Common myeloid progenitor, CD34-positive (primary cell): ENCODE measurements at regions of chr2 and their contacts with region 1.

Region 1: GRCh38 chr2:185738679-185739472 is at the start of gene FSIP2:
- DNase-seq: peak; percentile 82 to 83 (median 82)
- H3K4me3 ChIP-seq: peak within 1 kb of the TSS; percentile 15 to 81 (median 67)
- H3K27ac ChIP-seq: no peak within 1 kb of the TSS
- H3K4me1 ChIP-seq: peaks cover 0 to 11% (median 6%) of the 10 kb centered on the region in 4 experiments
- H3K27me3 ChIP-seq: peaks cover 0 to 19% (median 6%) of the 10 kb centered on the region in 5 experiments

Region 2: GRCh38 chr2:185291035-185291647 is 447.7 kb before region 1 on chr2:
- CTCF ChIA-PET with region 1: interaction called, 20 read pairs
- POLR2A ChIA-PET with region 1: no interaction called
- DNase-seq: peak; percentile 40 to 69 (median 66)
- H3K4me3 ChIP-seq: no peak overlapping the region
- H3K27ac ChIP-seq: no peak overlapping the region
- H3K4me1 ChIP-seq: no peaks in the 10 kb centered on the region
- H3K27me3 ChIP-seq: no peaks in the 10 kb centered on the region

Region 3: DNA sequence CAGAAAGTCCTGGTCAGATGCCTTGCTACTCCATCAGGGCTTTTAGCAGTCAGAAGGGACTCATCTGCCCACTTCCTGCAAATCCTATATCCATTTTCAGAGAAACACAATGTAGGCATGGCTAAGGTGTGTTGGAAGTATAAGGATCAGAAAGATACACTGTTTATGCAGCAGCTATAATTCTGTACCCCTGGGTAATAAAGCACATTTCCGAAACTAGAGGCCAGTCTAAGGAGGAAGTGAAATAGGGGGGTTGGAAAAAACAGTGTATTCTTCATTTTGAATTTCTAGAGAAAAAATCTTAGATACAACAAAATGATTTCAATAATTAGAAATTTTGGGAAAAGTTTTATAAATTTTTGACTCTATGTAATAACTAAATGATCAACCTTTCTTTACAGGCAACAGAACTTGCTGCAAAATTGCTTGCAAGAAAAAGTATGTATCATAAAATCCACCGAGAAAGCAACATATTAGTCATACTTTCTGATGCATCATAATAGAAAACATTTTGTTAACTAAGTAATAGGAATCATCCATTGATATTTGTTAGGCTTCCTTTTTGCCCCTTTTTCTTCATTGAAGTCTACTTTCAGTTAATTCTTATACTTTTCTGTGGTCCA is 47.1 kb after region 1 on chr2:
- CTCF ChIA-PET with region 1: no interaction called
- POLR2A ChIA-PET with region 1: no interaction called
- DNase-seq: no peak
- H3K4me3 ChIP-seq: no peak overlapping the region
- H3K27ac ChIP-seq: no peak overlapping the region
- H3K4me1 ChIP-seq: no peaks in the 10 kb centered on the region
- H3K27me3 ChIP-seq: no peaks in the 10 kb centered on the region